Activated T-helper 2 cell treated with anti-CD3 and anti-CD28 coated beads, Interferon-gamma antibody, Interleukin-2, Interleukin-4, amounts not matched to agents 10 μg/mL and 5 μg/mL and 100 μg/mL, durations not matched to agents 14 hours and 24 hours and 36 hours (primary cell): ENCODE measurements at regions of chr22 and their contacts with region 1.

Region 1: GRCh38 chr22:44080936-44081861 is 57.1 kb downstream of the PARVB start:
- DNase-seq: peak; percentile 43
- H3K4me3 Mint-ChIP-seq: no peak overlapping the region
- H3K27ac Mint-ChIP-seq: no peak overlapping the region
- H3K4me1 Mint-ChIP-seq: no peaks in the 10 kb centered on the region
- H3K27me3 Mint-ChIP-seq: no peaks in the 10 kb centered on the region

Region 2: GRCh38 chr22:43993027-43993760 is 88.0 kb before region 1 on chr22:
- intact Hi-C with region 1: loop called (anchors 1 kb)
- DNase-seq: peak; percentile 39
- H3K4me3 Mint-ChIP-seq: no peak overlapping the region
- H3K27ac Mint-ChIP-seq: peak overlapping the region; percentile 0
- H3K4me1 Mint-ChIP-seq: peaks cover 15% of the 10 kb centered on the region
- H3K27me3 Mint-ChIP-seq: no peaks in the 10 kb centered on the region

Region 3: DNA sequence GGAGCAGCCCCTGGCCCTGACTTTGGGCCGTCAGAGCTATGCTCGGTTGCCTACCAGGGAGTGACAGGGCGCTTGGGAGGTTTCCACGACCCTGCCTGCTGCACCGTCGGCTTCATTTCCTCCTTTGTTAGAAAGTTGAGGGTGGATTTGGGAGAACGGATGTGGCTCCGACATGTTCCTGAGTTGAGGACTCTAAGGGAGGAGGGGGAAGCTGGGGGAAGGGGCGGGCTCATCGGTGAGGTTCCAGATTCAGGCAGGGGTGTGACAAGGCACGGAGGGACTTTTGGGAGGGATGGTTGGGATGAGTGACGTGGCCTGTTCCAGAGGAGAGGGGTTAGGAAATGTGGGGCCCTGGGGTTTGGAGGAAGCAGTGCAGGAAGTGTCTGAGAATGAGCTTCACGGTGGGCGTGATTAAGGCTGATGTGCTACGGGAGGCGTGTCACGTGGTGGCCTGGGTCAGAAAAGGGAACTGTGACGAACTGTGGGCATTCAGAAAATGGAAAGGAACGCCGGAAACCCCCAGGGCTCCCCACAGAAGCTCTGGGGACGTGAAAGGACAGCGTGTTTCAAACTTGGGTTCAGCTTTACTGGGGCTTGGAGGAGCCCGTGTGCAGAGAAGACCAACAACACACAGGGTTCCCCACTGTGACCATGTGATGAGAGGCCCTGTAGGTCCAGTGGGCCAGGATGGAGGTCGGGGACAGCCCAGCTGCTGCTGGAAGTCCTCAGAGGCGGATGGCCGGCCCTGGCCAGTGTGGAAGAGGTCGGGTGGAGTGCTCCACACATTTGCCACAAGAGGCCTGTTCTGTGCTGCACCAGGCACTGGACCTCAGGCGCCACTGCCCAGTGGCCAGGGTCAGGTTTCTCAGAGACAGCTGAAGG is 54.3 kb before region 1 on chr22:
- intact Hi-C with region 1: loop called (anchors 10 kb)
- DNase-seq: peak; percentile 70
- H3K4me3 Mint-ChIP-seq: peak overlapping the region; percentile 89
- H3K27ac Mint-ChIP-seq: peak overlapping the region; percentile 98
- H3K4me1 Mint-ChIP-seq: peaks cover 51% of the 10 kb centered on the region
- H3K27me3 Mint-ChIP-seq: no peaks in the 10 kb centered on the region

Region 4: GRCh38 chr22:44625981-44626687 is 544.9 kb after region 1 on chr22:
- intact Hi-C with region 1: loop called (anchors 10 kb)
- DNase-seq: peak; percentile 73
- H3K4me3 Mint-ChIP-seq: no peak overlapping the region
- H3K27ac Mint-ChIP-seq: no peak overlapping the region
- H3K4me1 Mint-ChIP-seq: peaks cover 2% of the 10 kb centered on the region
- H3K27me3 Mint-ChIP-seq: peaks cover 3% of the 10 kb centered on the region